ENCODE measurements at regions of chr15 and their contacts with region 1.

Region 1: DNA sequence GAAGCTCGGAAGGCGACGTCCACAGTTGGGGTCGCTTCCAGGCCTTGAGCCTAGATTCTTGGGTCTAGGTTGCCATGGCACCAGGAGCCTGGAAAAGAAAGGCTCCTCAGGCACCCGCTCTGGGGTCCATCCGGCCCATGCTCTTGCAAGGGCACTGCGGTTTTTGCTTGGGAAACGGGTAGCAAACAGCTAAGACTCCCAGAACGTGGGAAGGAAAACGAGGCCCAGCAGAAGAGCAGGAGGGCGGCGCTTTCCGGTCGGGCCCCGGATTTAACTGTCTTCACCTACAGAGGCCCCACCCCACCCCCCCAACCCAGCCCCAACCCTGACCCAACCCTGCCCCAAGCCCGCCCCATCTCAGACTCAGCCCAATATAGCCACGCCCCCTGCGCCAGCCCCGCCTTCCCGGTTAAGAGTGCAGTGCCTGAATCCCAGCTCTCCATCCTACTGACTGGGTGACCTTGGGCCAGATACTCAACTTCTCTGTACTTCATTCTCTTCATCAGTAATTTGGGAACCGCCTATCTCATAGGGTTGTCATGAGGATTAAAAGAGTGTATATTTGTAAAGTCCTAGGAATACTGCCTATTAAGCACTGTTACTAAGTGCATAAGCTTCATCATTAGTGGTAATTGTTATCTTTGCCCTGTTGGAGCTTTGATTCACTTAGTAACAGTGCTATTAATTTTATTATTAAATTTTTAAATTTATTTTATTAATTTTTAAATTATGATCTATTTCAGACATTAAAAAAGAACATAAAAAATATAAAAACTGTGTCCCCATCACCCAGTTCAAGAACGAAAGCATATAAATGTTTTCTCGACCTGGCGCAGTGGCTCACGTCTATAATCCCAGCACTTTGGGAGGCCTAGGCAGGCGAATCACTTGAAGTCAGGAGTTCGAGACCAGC is 28.4 kb upstream of the SMAD6 start:
- DNase-seq: peak; percentile 95
- ATAC-seq: peak; percentile 82
- H3K4me3 Mint-ChIP-seq: no peak overlapping the region
- H3K27ac Mint-ChIP-seq: no peak overlapping the region
- H3K4me1 Mint-ChIP-seq: peaks cover 29% of the 10 kb centered on the region
- H3K27me3 Mint-ChIP-seq: peaks cover 11% of the 10 kb centered on the region
- CTCF ChIP-seq: no peak

Region 2: GRCh38 chr15:66312144-66312543 is 361.5 kb before region 1 on chr15:
- CTCF ChIA-PET with region 1: no interaction called
- POLR2A ChIA-PET with region 1: no interaction called
- DNase-seq: no peak
- ATAC-seq: no peak
- H3K4me3 Mint-ChIP-seq: no peak overlapping the region
- H3K27ac Mint-ChIP-seq: no peak overlapping the region
- H3K4me1 Mint-ChIP-seq: no peaks in the 10 kb centered on the region
- H3K27me3 Mint-ChIP-seq: no peaks in the 10 kb centered on the region
- CTCF ChIP-seq: no peak

Region 3: GRCh38 chr15:66603301-66604179 is 70.1 kb before region 1 on chr15:
- CTCF ChIA-PET with region 1: no interaction called
- POLR2A ChIA-PET with region 1: no interaction called
- DNase-seq: peak; percentile 82
- ATAC-seq: peak; percentile 95
- H3K4me3 Mint-ChIP-seq: no peak overlapping the region
- H3K27ac Mint-ChIP-seq: no peak overlapping the region; the same call in 1 of the 2 replicates
- H3K4me1 Mint-ChIP-seq: no peaks in the 10 kb centered on the region
- H3K27me3 Mint-ChIP-seq: no peaks in the 10 kb centered on the region
- CTCF ChIP-seq: peak; percentile 95

Region 4: GRCh38 chr15:66685638-66686150 is 12.0 kb after region 1 on chr15:
- CTCF ChIA-PET with region 1: interaction called, 10 read pairs
- POLR2A ChIA-PET with region 1: no interaction called
- DNase-seq: no peak
- ATAC-seq: peak; percentile 34; the same call in 1 of the 2 replicates
- H3K4me3 Mint-ChIP-seq: no peak overlapping the region
- H3K27ac Mint-ChIP-seq: no peak overlapping the region
- H3K4me1 Mint-ChIP-seq: no peaks in the 10 kb centered on the region
- H3K27me3 Mint-ChIP-seq: no peaks in the 10 kb centered on the region; the same call in 1 of the 2 replicates
- CTCF ChIP-seq: no peak

Region 5: DNA sequence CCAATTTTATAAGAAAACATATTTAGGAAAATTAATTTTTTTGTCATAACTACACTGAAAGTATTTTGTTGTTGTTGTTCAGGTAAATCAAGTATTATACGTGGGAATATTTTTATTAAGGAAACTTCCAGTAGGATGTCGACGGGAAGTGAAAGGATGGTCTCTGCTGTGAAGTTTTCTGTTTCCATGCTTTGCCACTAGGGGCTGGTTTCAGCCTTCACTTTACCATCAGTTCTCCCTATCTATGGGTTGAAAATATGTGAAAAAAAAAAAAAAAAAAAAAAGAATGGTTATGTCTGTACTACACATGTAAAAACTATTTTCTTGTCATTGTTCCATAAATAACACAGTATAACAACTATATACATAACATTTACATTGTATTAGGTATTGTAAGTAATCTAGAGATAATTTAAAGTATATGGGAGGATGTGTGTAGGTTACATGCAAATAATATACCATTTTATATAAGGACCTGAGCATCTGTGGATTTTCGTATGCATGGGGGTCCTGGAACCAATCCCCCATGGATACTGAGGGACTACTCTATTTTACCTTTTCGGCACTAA is 165.1 kb after region 1 on chr15:
- CTCF ChIA-PET with region 1: no interaction called
- POLR2A ChIA-PET with region 1: no interaction called
- DNase-seq: no peak
- ATAC-seq: no peak
- H3K4me3 Mint-ChIP-seq: no peak overlapping the region
- H3K27ac Mint-ChIP-seq: no peak overlapping the region
- H3K4me1 Mint-ChIP-seq: peaks cover 37% of the 10 kb centered on the region
- H3K27me3 Mint-ChIP-seq: peaks cover 33% of the 10 kb centered on the region
- CTCF ChIP-seq: no peak